ENCODE measurements at regions of chr9 and their contacts with region 1.

Region 1: GRCh38 chr9:32703635-32704034 is 68.2 kb upstream of the TAF1L start:
- DNase-seq: peak in 1 of 4 experiments; percentile 5
- ATAC-seq: peak; percentile 65; the same call in 2 of the 3 replicates
- H3K4me3 ChIP-seq: no peak overlapping the region
- H3K27ac ChIP-seq: no peak overlapping the region
- H3K4me1 ChIP-seq: no peaks in the 10 kb centered on the region; a peak in 3 of 5 replicates
- H3K27me3 ChIP-seq: no peaks in the 10 kb centered on the region
- CTCF ChIP-seq: peak; percentile 23 to 24 (median 24); a peak in 3 of 6 replicates
- EP300 ChIP-seq: no peak
- POLR2A ChIP-seq: no peak
- RAD21 ChIP-seq: no peak; a peak in 1 of 4 replicates

Region 2: GRCh38 chr9:32579706-32580331 is 123.8 kb before region 1 on chr9:
- CTCF ChIA-PET with region 1: no interaction called
- POLR2A ChIA-PET with region 1: no interaction called
- in situ Hi-C with region 1: no loop called
- intact Hi-C with region 1: loop called (anchors 10 kb)
- DNase-seq: peak; percentile 27 to 60 (median 40)
- ATAC-seq: peak; percentile 59; the same call in 1 of the 3 replicates
- H3K4me3 ChIP-seq: no peak overlapping the region
- H3K27ac ChIP-seq: no peak overlapping the region
- H3K4me1 ChIP-seq: no peaks in the 10 kb centered on the region; a peak in 1 of 5 replicates
- H3K27me3 ChIP-seq: no peaks in the 10 kb centered on the region
- CTCF ChIP-seq: peak; percentile 71 to 84 (median 75)
- EP300 ChIP-seq: no peak
- POLR2A ChIP-seq: no peak
- RAD21 ChIP-seq: peak; percentile 60 to 85

Region 3: GRCh38 chr9:34665381-34666250 is 1962.0 kb after region 1 on chr9:
- CTCF ChIA-PET with region 1: no interaction called
- POLR2A ChIA-PET with region 1: no interaction called
- in situ Hi-C with region 1: no loop called
- intact Hi-C with region 1: no loop called
- DNase-seq: peak; percentile 91 to 95 (median 93)
- ATAC-seq: peak; percentile 88
- H3K4me3 ChIP-seq: peak overlapping the region; percentile 75
- H3K27ac ChIP-seq: peak overlapping the region; percentile 95
- H3K4me1 ChIP-seq: peaks cover 17 to 19% of the 10 kb centered on the region in 2 experiments
- H3K27me3 ChIP-seq: no peaks in the 10 kb centered on the region
- CTCF ChIP-seq: no peak
- EP300 ChIP-seq: peak; percentile 32
- POLR2A ChIP-seq: peak; percentile 94
- RAD21 ChIP-seq: no peak